ENCODE measurements at regions of chr15 and their contacts with region 1.

Region 1: DNA sequence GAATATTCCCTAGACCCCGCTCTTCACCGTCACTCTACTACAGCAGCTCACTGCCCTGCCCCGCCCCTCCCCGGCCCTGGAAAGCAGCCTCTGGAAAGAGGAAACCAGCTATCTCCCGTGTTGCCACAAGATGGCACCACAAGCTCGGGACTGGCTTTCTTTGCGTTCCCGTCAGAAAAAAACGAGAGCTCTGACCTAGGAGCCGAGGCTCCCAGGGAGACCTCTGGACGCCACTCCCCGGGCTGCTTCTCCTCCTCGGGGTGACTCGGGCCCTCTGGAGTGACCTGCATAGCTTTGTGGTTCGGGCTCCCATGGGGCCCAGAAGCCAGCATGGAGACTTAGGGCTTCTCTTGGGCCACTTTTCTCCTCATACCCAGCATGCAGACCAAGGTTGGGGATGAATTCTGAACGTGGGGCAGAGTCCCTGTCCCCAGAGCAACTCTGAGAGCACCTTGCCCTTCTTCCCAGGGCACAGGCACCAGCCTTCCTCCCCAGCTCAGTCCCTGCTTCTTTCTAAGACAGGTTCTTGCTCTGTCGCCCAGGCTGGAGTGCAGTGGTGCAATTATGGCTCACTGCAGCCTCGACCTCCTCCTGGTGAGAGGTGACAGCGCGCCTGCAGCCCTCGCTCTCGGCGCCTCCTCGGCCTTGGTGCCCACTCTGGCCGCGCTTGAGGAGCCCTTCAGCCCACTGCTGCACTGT is 19.0 kb downstream of the STOML1 start:
- DNase-seq: peak; percentile 73
- ATAC-seq: peak; percentile 97
- H3K4me3 ChIP-seq: no peak overlapping the region
- H3K27ac ChIP-seq: no peak overlapping the region
- H3K4me1 ChIP-seq: 0 out of 2 replicates have a peak, but pooled peaks cover 1% of the 10 kb centered on the region
- H3K27me3 ChIP-seq: 0 out of 2 replicates have a peak, but pooled peaks cover 3% of the 10 kb centered on the region
- CTCF ChIP-seq: peak; percentile 98
- POLR2A ChIP-seq: peak; percentile 62
- RAD21 ChIP-seq: peak; percentile 99

Region 2: GRCh38 chr15:73318463-73319351 is 654.4 kb before region 1 on chr15:
- CTCF ChIA-PET with region 1: no interaction called
- POLR2A ChIA-PET with region 1: no interaction called
- dilution Hi-C with region 1: no loop called
- in situ Hi-C with region 1: no loop called
- intact Hi-C with region 1: no loop called
- DNase-seq: no peak
- ATAC-seq: 0 out of 2 replicates have a peak, but pooled peaks have one; percentile 24
- H3K4me3 ChIP-seq: no peak overlapping the region
- H3K27ac ChIP-seq: no peak overlapping the region
- H3K4me1 ChIP-seq: no peaks in the 10 kb centered on the region; the same call in 1 of the 2 replicates
- H3K27me3 ChIP-seq: peaks cover 30% of the 10 kb centered on the region
- CTCF ChIP-seq: no peak
- POLR2A ChIP-seq: no peak
- RAD21 ChIP-seq: no peak

Region 3: GRCh38 chr15:74047781-74048180 is 74.6 kb after region 1 on chr15:
- CTCF ChIA-PET with region 1: interaction called, 11 read pairs
- POLR2A ChIA-PET with region 1: no interaction called
- dilution Hi-C with region 1: no loop called
- in situ Hi-C with region 1: no loop called
- intact Hi-C with region 1: loop called (anchors 5 kb)
- DNase-seq: no peak
- ATAC-seq: no peak
- H3K4me3 ChIP-seq: no peak overlapping the region
- H3K27ac ChIP-seq: 0 out of 2 replicates have a peak overlapping the region, but pooled peaks have one; percentile 0
- H3K4me1 ChIP-seq: peaks cover 27% of the 10 kb centered on the region
- H3K27me3 ChIP-seq: no peaks in the 10 kb centered on the region
- CTCF ChIP-seq: no peak
- POLR2A ChIP-seq: no peak
- RAD21 ChIP-seq: no peak

Region 4: DNA sequence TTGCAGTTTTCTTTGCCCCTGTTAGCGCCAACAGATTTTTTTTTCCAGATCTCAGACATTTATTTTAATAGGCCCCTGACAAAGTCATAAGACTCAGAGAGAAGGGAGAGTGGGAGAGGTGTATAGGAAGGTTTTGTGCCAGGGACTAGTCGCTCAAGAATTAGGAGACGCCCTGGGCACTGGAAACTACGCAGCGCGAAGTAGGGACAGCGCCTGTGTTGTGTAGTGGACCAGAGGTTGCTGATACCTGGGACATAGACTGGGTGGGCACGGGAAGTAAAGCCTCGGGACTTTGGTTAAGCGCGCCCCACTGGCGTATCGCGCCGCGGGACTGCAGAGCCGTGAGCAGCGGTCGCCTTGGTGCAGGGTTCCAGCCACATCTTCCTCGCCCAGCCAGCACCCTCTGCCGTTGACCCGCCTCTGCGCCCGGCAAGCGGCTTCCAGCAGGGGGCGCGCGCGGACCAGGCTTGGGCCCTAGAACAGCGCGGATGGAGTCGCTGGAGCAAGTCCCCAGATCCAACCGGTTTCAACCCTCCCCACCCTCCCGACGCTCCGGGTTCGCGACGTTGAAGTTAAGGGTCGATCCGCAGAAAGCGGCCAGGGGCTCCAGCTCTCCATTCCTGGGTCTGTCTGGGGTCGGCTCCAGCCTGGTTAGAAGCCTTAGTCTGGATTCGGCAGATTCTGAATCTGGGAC is 154.3 kb after region 1 on chr15:
- CTCF ChIA-PET with region 1: interaction called, 4 read pairs
- POLR2A ChIA-PET with region 1: no interaction called
- dilution Hi-C with region 1: no loop called
- in situ Hi-C with region 1: loop called (anchors 5 kb)
- intact Hi-C with region 1: loop called (anchors 1 kb)
- DNase-seq: peak; percentile 75
- ATAC-seq: peak; percentile 98
- H3K4me3 ChIP-seq: peak overlapping the region; percentile 16; the same call in 1 of the 2 replicates
- H3K27ac ChIP-seq: no peak overlapping the region
- H3K4me1 ChIP-seq: no peaks in the 10 kb centered on the region; the same call in 1 of the 2 replicates
- H3K27me3 ChIP-seq: peaks cover 89% of the 10 kb centered on the region
- CTCF ChIP-seq: peak; percentile 99
- POLR2A ChIP-seq: 0 out of 2 replicates have a peak, but pooled peaks have one; percentile 37
- RAD21 ChIP-seq: peak; percentile 99

Region 5: DNA sequence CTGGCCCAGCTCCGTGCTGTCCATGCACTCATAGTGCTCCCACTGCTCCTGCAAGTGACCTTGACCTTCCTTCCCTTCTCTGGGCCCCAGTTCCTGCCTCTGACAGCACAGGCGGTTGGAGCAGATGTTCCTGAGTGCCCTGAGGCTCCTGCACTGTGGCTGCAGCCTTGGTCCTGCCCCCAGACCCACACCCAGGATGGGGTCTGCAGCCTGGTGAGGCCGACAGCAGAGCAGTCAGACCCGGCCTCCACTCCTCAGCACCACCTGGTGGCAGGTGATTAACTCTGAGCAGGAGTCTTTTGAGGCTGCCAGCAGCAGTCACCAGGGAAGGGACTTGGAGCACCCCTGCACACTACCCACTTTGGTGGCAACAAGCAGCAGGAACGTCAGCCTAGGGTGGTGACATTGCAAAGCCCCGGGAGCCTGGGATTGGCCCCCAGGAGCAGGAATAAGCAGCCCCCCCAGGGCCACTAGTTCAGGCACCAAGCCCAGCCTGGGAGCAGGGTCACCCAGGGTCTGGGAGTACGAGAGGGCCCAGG is 329.8 kb after region 1 on chr15:
- CTCF ChIA-PET with region 1: interaction called, 4 read pairs
- POLR2A ChIA-PET with region 1: no interaction called
- dilution Hi-C with region 1: no loop called
- in situ Hi-C with region 1: no loop called
- intact Hi-C with region 1: loop called (anchors 1 kb)
- DNase-seq: no peak
- ATAC-seq: peak; percentile 63
- H3K4me3 ChIP-seq: no peak overlapping the region
- H3K27ac ChIP-seq: no peak overlapping the region
- H3K4me1 ChIP-seq: no peaks in the 10 kb centered on the region
- H3K27me3 ChIP-seq: peaks cover 87% of the 10 kb centered on the region
- CTCF ChIP-seq: peak; percentile 49
- POLR2A ChIP-seq: no peak
- RAD21 ChIP-seq: peak; percentile 61